CD4-positive, alpha-beta memory T cell (primary cell): ENCODE measurements at regions of chr6 and their contacts with region 1.

Region 1: GRCh38 chr6:26031595-26032339 is 55.5 kb upstream of the HFE start:
- DNase-seq: peak; percentile 86 to 94 (median 89)
- H3K4me3 ChIP-seq: peak overlapping the region; percentile 53 to 67
- H3K4me3 Mint-ChIP-seq: peak overlapping the region; percentile 91 to 99 (median 94)
- H3K27ac ChIP-seq: peak overlapping the region; percentile 71
- H3K27ac Mint-ChIP-seq: peak overlapping the region; percentile 89 to 98 (median 96)
- H3K4me1 ChIP-seq: peaks cover 35% of the 10 kb centered on the region
- H3K4me1 Mint-ChIP-seq: peaks cover 33 to 54% (median 44%) of the 10 kb centered on the region in 4 donors
- H3K27me3 ChIP-seq: no peaks in the 10 kb centered on the region
- H3K27me3 Mint-ChIP-seq: peaks cover 0 to 3% of the 10 kb centered on the region in 2 donors

Region 2: DNA sequence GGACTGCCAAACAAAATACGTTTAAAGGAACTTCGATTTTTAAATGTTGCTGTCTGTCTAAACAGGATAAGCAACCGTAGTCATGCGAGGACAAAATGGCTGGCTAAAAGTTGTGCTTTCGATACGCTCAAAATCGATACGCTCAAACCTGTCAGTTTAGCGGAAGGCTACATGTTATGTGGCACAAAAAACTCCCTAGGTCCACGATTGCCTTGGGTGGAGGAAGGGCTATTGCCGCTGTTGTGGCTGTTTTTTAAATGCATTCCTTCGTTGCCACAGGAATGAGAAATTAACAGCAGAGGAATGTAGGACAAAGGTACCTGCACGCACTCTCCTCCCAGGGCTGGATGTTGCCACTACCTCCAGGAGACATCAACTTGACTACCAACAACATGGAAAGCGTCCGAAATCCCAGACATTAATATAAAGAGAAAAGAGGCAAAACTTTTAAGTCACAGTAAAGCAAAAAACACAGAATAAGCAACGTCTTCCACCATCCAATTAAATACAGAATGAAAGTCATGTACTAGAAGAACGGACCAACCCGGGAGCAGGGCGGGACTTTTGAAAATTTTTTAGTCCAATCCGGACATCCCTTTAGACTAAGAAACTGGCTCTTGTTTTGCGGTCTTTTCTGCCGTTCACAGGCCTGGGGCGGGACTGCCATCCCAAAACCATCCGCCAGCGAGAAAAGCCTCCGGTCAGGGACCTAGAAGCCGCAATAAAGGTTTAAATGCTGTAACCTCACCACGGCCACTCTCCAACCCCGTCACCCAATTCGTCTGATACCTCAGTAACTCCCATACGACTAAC is 23.3 kb after region 1 on chr6:
- CTCF ChIA-PET with region 1: interaction called, 16 read pairs
- POLR2A ChIA-PET with region 1: interaction called, 1,198 read pairs
- intact Hi-C with region 1: loop called (anchors 1 kb)
- DNase-seq: peak; percentile 89 to 96 (median 91)
- H3K4me3 ChIP-seq: peak overlapping the region; percentile 67 to 78
- H3K4me3 Mint-ChIP-seq: peak overlapping the region; percentile 93 to 96 (median 94)
- H3K27ac ChIP-seq: peak overlapping the region; percentile 84
- H3K27ac Mint-ChIP-seq: peak overlapping the region; percentile 91 to 98 (median 98)
- H3K4me1 ChIP-seq: peaks cover 24% of the 10 kb centered on the region
- H3K4me1 Mint-ChIP-seq: peaks cover 7 to 34% (median 15%) of the 10 kb centered on the region in 4 donors
- H3K27me3 ChIP-seq: no peaks in the 10 kb centered on the region
- H3K27me3 Mint-ChIP-seq: no peaks in the 10 kb centered on the region

Region 3: GRCh38 chr6:26175428-26176181 is 143.8 kb after region 1 on chr6:
- CTCF ChIA-PET with region 1: no interaction called
- POLR2A ChIA-PET with region 1: interaction called, 12 read pairs
- intact Hi-C with region 1: no loop called
- DNase-seq: peak; percentile 50 to 73 (median 70)
- H3K4me3 ChIP-seq: no peak overlapping the region
- H3K4me3 Mint-ChIP-seq: peak overlapping the region in 4 of 8 donors; percentile 37 to 70 (median 65)
- H3K27ac ChIP-seq: no peak overlapping the region
- H3K27ac Mint-ChIP-seq: peak overlapping the region; percentile 28 to 89 (median 78)
- H3K4me1 ChIP-seq: peaks cover 37% of the 10 kb centered on the region
- H3K4me1 Mint-ChIP-seq: peaks cover 21 to 40% (median 27%) of the 10 kb centered on the region in 4 donors
- H3K27me3 ChIP-seq: no peaks in the 10 kb centered on the region
- H3K27me3 Mint-ChIP-seq: no peaks in the 10 kb centered on the region

Region 4: GRCh38 chr6:26249957-26250697 is 218.4 kb after region 1 on chr6:
- CTCF ChIA-PET with region 1: no interaction called
- POLR2A ChIA-PET with region 1: interaction called, 18 read pairs
- intact Hi-C with region 1: no loop called
- DNase-seq: peak; percentile 79 to 88 (median 83)
- H3K4me3 ChIP-seq: peak overlapping the region; percentile 86 to 88
- H3K4me3 Mint-ChIP-seq: peak overlapping the region; percentile 92 to 99 (median 98)
- H3K27ac ChIP-seq: peak overlapping the region; percentile 59
- H3K27ac Mint-ChIP-seq: peak overlapping the region; percentile 85 to 97 (median 94)
- H3K4me1 ChIP-seq: peaks cover 25% of the 10 kb centered on the region
- H3K4me1 Mint-ChIP-seq: peaks cover 28 to 53% (median 40%) of the 10 kb centered on the region in 4 donors
- H3K27me3 ChIP-seq: no peaks in the 10 kb centered on the region
- H3K27me3 Mint-ChIP-seq: no peaks in the 10 kb centered on the region

Region 5: GRCh38 chr6:27871924-27872638 is 1840.3 kb after region 1 on chr6:
- CTCF ChIA-PET with region 1: interaction called, 4 read pairs
- POLR2A ChIA-PET with region 1: interaction called, 26 read pairs
- intact Hi-C with region 1: no loop called
- DNase-seq: peak; percentile 91 to 96 (median 94)
- H3K4me3 ChIP-seq: peak overlapping the region; percentile 77 to 89
- H3K4me3 Mint-ChIP-seq: peak overlapping the region; percentile 87 to 94 (median 90)
- H3K27ac ChIP-seq: peak overlapping the region; percentile 86
- H3K27ac Mint-ChIP-seq: peak overlapping the region; percentile 89 to 97 (median 94)
- H3K4me1 ChIP-seq: peaks cover 33% of the 10 kb centered on the region
- H3K4me1 Mint-ChIP-seq: peaks cover 24 to 48% (median 33%) of the 10 kb centered on the region in 4 donors
- H3K27me3 ChIP-seq: no peaks in the 10 kb centered on the region
- H3K27me3 Mint-ChIP-seq: no peaks in the 10 kb centered on the region